Activated CD4-positive, alpha-beta T cell treated with anti-CD3 and anti-CD28 coated beads for 36 hours (primary cell): ENCODE measurements at regions of chr9 and their contacts with region 1.

Region 1: DNA sequence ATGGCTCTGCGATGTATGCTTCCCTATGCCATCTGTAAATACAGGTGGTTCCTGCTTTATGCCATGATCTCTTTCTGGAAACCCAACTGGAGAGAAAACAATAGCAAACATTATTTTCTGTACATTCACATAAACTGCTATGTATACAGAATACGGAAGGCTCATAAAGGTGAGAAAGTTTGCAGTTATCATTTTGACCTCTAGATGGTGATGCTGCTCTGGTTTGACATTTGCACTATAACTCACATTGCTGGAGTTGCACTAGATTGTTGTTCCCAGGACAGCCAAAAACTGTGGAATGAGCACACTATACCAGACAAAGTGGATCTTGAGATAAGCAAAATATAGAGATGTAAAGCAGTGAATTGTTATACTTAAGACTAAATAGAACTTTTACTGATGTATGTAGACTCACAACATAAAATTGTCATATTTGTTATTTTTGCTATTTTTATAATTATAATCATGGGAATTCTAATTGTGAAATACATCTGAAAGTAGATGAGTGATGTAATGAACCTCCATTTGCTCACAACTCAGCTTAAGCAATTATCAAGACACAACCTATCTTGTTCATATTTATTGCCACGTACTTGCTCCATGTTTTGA is 246.5 kb downstream of the PTPRD start:
- DNase-seq: no peak
- ATAC-seq: no peak
- H3K4me3 Mint-ChIP-seq: no peak overlapping the region
- H3K27ac Mint-ChIP-seq: no peak overlapping the region
- H3K4me1 Mint-ChIP-seq: no peaks in the 10 kb centered on the region
- H3K27me3 Mint-ChIP-seq: no peaks in the 10 kb centered on the region

Region 2: DNA sequence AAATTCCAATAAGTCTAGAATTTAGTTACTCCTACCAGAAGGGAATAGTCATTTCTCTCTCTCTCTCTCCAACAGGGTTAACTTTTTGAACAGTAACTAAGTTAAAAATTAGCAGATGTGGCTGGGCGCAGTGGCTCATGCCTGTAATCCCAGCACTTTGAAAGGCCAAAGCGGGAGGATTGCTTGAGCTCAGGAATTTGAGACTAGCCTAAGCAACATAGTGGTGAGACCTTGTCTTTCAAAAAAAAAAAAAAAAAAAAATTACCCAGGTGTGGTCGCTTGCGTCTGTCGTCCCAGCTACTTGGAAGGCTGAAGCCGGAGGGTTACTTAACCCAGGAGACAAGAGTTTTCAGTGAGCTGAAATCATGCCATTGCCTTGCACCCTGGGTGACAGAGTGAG is 393.2 kb before region 1 on chr9:
- CTCF ChIA-PET with region 1: no interaction called
- POLR2A ChIA-PET with region 1: no interaction called
- intact Hi-C with region 1: no loop called
- DNase-seq: no peak
- ATAC-seq: no peak
- H3K4me3 Mint-ChIP-seq: no peak overlapping the region
- H3K27ac Mint-ChIP-seq: no peak overlapping the region
- H3K4me1 Mint-ChIP-seq: no peaks in the 10 kb centered on the region
- H3K27me3 Mint-ChIP-seq: no peaks in the 10 kb centered on the region

Region 3: GRCh38 chr9:10434412-10434811 is 68.1 kb after region 1 on chr9:
- CTCF ChIA-PET with region 1: no interaction called
- POLR2A ChIA-PET with region 1: no interaction called
- intact Hi-C with region 1: no loop called
- DNase-seq: no peak
- ATAC-seq: no peak
- H3K4me3 Mint-ChIP-seq: no peak overlapping the region
- H3K27ac Mint-ChIP-seq: no peak overlapping the region
- H3K4me1 Mint-ChIP-seq: no peaks in the 10 kb centered on the region
- H3K27me3 Mint-ChIP-seq: no peaks in the 10 kb centered on the region

Region 4: DNA sequence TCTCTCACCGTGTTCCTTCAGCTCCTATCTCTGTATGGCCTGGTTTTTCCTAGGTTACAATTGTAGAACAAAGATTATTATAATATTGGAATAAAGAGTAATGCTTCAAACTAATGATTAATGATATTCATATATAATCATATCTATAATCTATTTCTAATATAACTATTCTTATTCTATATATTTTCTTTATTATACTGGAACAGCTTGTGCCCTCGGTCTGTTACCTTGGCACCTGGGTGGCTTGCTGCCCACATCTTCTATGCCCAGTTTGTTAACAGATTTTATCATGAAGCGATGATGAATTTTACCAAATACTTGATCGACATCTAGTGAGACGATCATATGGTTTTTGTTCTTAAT is 1963.3 kb after region 1 on chr9:
- CTCF ChIA-PET with region 1: no interaction called
- POLR2A ChIA-PET with region 1: no interaction called
- intact Hi-C with region 1: loop called in 1 of 2 experiments (anchors 5 kb)
- DNase-seq: no peak
- ATAC-seq: no peak
- H3K4me3 Mint-ChIP-seq: no peak overlapping the region
- H3K27ac Mint-ChIP-seq: no peak overlapping the region
- H3K4me1 Mint-ChIP-seq: no peaks in the 10 kb centered on the region
- H3K27me3 Mint-ChIP-seq: no peaks in the 10 kb centered on the region